Right ventricle myocardium superior (tissue), 1 donor: ENCODE measurements at regions of chr1 and their contacts with region 1.

Region 1: GRCh38 chr1:193121616-193122593 is at the start of gene CDC73:
- DNase-seq: peak; percentile 99
- ATAC-seq: peak; percentile 99
- total RNA-seq, gene CDC73: 52.9 TPM

Region 2: DNA sequence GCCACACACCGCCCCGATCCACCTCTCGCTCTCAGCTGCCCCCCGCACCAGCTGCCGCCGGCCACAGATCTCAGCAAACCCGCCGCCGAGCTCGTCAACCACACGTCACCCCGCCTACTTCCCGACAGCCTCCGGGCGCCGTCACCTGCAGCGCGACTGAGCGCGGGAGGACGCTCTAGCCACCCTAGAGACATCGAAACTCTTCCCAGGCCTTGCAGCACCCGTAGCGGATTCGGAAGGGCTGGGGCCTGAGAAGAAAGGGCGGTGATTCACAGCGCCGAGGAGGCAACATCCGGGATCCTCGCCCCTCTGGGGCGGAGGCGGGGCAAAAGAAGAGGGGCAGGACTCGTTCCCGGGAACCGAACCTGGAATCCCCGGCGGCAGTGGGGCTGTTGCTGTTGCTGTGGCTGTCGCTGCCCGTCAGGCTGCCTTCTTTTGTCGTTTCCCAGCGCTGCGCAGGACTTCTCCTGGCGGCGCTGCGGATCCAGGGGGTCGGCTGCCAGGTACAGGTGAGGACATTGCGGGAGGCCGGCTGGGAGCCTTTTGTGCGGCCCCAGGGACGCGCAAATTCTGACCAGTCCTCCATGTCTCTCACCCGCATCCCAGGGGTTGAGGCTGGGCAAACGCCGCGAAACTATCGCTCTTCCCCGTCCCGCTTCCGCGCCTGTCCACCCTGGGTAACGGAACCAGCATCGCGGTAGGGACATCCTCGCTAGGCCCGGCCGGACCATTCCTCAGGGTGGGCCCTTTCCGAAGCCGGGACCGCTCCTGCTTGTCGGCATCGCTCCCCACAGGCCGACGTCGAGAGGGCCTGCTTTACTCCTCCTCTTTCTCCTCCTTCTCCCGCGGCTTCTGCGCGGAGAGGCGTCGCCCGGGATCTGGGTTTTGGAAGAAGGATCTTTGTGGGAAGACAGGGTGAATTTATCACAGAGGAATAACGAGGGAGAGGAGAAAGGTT is 62.4 kb before region 1 on chr1 and contains the starts of genes RO60 and UCHL5:
- intact Hi-C with region 1: loop called (anchors 10 kb)
- DNase-seq: peak; percentile 97
- ATAC-seq: peak; percentile 97
- total RNA-seq, gene RO60: 47.8 TPM
- total RNA-seq, gene UCHL5: 42.3 TPM